ENCODE measurements at regions of chr7 and their contacts with region 1.

Region 1: GRCh38 chr7:113100121-113100603 is 13.5 kb upstream of the GPR85 start:
- DNase-seq: no peak
- H3K4me3 ChIP-seq: no peak overlapping the region
- H3K27ac ChIP-seq: no peak overlapping the region
- H3K4me1 ChIP-seq: 0 out of 2 replicates have a peak, but pooled peaks cover 9% of the 10 kb centered on the region
- H3K27me3 ChIP-seq: no peaks in the 10 kb centered on the region
- CTCF ChIP-seq: no peak

Region 2: GRCh38 chr7:112437043-112437442 is 663.1 kb before region 1 on chr7:
- CTCF ChIA-PET with region 1: no interaction called
- POLR2A ChIA-PET with region 1: no interaction called
- intact Hi-C with region 1: no loop called
- DNase-seq: peak in 1 of 2 experiments; percentile 10
- H3K4me3 ChIP-seq: no peak overlapping the region
- H3K27ac ChIP-seq: no peak overlapping the region
- H3K4me1 ChIP-seq: peaks cover 7% of the 10 kb centered on the region
- H3K27me3 ChIP-seq: no peaks in the 10 kb centered on the region
- CTCF ChIP-seq: no peak

Region 3: GRCh38 chr7:112782494-112782893 is 317.7 kb before region 1 on chr7:
- CTCF ChIA-PET with region 1: no interaction called
- POLR2A ChIA-PET with region 1: no interaction called
- intact Hi-C with region 1: no loop called
- DNase-seq: no peak
- H3K4me3 ChIP-seq: no peak overlapping the region
- H3K27ac ChIP-seq: no peak overlapping the region
- H3K4me1 ChIP-seq: no peaks in the 10 kb centered on the region
- H3K27me3 ChIP-seq: no peaks in the 10 kb centered on the region
- CTCF ChIP-seq: no peak

Region 4: DNA sequence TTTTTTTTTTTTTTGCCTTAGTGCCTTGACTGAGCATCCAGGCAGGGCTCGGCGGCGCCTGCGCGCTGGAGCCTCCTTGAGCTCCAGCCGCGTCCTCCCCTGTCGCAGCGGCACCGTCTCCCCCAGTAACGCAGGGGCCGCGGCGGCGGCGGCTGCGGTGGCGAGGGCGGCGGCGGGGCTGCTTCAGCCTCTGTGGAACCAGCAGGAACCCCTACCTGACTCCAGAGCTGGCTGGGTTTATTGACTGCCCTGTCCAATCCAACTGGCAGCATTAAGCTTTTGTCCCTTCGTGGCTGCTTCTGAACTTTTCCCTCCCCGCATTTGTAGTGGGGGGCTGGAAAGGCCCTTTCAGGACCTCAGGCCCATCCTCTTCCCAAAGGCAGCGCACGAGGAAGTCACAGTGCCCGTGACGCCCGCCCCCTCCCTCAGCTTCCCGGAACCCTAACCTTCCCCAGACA is 13.7 kb before region 1 on chr7 and contains the start of gene GPR85:
- CTCF ChIA-PET with region 1: no interaction called
- POLR2A ChIA-PET with region 1: interaction called, 11 read pairs
- intact Hi-C with region 1: no loop called
- DNase-seq: peak; percentile 43 to 63
- H3K4me3 ChIP-seq: peak within 1 kb of the TSS; percentile 65
- H3K27ac ChIP-seq: no peak within 1 kb of the TSS
- H3K4me1 ChIP-seq: no peaks in the 10 kb centered on the region; the same call in 1 of the 2 replicates
- H3K27me3 ChIP-seq: peaks cover 7% of the 10 kb centered on the region; the same call in 1 of the 2 replicates
- CTCF ChIP-seq: no peak
- total RNA-seq, gene GPR85: 0.30 and 0.65 TPM in 2 replicates